Heart right ventricle (tissue), 16 donors: ENCODE measurements at regions of chr18 and their contacts with region 1.

Region 1: GRCh38 chr18:36638224-36638623 is 190.6 kb downstream of the TPGS2 start:
- DNase-seq: no peak
- ATAC-seq: no peak
- H3K4me3 ChIP-seq: no peak overlapping the region
- H3K27ac ChIP-seq: no peak overlapping the region
- H3K4me1 ChIP-seq: peaks cover 0 to 49% (median 14%) of the 10 kb centered on the region in 9 donors
- H3K27me3 ChIP-seq: no peaks in the 10 kb centered on the region
- CTCF ChIP-seq: no peak

Region 2: DNA sequence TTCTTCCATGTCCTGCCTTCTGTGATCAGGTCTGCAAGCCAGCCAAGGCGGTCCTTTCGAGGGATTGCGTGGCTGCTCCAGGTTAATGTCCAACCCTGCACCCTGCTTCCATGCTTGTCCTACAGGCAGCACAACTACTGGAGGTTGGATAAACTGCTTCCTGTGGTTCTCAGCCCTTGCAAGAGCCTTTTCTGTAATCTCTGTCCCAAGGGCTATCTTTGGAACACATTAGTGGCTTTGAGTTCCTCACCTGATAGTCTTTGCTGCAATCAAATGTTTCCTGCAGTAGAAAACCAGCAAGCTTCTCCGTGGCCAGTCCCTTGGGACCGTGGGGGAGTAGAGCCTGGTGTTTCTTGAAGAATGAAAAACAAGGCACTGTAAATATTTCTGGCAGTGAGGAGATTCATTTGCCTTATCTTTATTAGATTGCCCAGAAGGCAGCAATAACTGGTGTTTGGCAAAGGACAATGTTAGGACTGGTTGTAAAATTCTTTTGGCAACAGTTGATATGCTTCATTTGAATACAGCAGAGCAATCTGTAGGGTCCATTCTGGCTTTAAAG is 126.4 kb before region 1 on chr18:
- intact Hi-C with region 1: no loop called
- DNase-seq: no peak
- ATAC-seq: peak in 7 of 8 donors; percentile 10 to 67 (median 58)
- H3K4me3 ChIP-seq: no peak overlapping the region
- H3K27ac ChIP-seq: peak overlapping the region in 7 of 10 donors; percentile 2 to 56 (median 26)
- H3K4me1 ChIP-seq: peaks cover 0 to 40% (median 21%) of the 10 kb centered on the region in 9 donors
- H3K27me3 ChIP-seq: no peaks in the 10 kb centered on the region
- CTCF ChIP-seq: no peak

Region 3: DNA sequence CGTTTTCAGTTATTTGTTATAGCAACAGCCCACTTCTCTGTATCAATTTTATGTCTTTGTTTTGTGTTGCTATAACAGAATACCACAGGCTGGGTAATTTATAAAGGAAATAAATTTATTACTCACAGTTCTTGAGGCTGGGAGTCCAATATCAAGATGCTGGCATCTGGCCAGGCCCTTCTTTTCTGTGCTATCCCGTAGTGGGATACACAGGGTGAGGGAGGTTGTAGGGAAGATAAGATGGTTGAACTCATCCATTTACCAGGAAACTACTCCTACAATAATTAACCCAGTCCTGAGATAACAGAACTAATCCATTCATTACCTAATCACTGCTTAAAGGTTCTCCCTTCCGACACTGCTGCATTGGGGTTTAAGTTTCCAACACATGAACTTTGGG is 30.1 kb before region 1 on chr18:
- intact Hi-C with region 1: loop called in 1 of 10 experiments (anchors 1 kb)
- DNase-seq: no peak
- ATAC-seq: no peak
- H3K4me3 ChIP-seq: no peak overlapping the region
- H3K27ac ChIP-seq: peak overlapping the region in 1 of 10 donors; percentile 10
- H3K4me1 ChIP-seq: peaks cover 0 to 28% (median 9%) of the 10 kb centered on the region in 9 donors
- H3K27me3 ChIP-seq: no peaks in the 10 kb centered on the region
- CTCF ChIP-seq: no peak

Region 4: DNA sequence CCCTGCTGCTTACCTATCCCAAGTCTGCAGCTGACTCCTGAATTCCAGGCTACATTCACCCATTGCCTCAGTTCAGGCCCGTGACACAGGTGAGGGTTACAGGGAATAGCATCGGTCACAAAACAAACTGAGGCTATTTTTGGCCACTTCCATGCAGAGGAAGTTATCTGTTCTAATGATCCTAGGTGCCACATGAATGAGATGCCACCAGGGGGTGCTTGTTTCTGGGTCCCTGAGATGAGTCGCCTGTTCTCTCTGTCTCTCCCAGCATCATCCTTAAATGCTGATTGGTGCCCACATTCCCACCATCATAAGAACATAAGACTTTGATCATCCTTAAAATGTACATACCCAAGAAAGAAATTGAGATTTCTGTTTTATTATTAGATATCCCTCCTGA is 1046.4 kb after region 1 on chr18:
- intact Hi-C with region 1: no loop called
- DNase-seq: no peak
- ATAC-seq: no peak
- H3K4me3 ChIP-seq: no peak overlapping the region
- H3K27ac ChIP-seq: no peak overlapping the region
- H3K4me1 ChIP-seq: no peaks in the 10 kb centered on the region
- H3K27me3 ChIP-seq: peaks cover 0 to 14% (median 5%) of the 10 kb centered on the region in 7 donors
- CTCF ChIP-seq: no peak